ENCODE measurements at regions of chr3 and their contacts with region 1.

Region 1: GRCh38 chr3:72996473-72997333 is at the start of gene PPP4R2:
- DNase-seq: peak; percentile 90
- H3K4me3 Mint-ChIP-seq: peak within 1 kb of the TSS; percentile 86
- H3K27ac Mint-ChIP-seq: peak within 1 kb of the TSS; percentile 88
- H3K4me1 Mint-ChIP-seq: peaks cover 38% of the 10 kb centered on the region
- H3K27me3 Mint-ChIP-seq: no peaks in the 10 kb centered on the region
- total RNA-seq, gene PPP4R2: 68.1 to 71.6 TPM

Region 2: DNA sequence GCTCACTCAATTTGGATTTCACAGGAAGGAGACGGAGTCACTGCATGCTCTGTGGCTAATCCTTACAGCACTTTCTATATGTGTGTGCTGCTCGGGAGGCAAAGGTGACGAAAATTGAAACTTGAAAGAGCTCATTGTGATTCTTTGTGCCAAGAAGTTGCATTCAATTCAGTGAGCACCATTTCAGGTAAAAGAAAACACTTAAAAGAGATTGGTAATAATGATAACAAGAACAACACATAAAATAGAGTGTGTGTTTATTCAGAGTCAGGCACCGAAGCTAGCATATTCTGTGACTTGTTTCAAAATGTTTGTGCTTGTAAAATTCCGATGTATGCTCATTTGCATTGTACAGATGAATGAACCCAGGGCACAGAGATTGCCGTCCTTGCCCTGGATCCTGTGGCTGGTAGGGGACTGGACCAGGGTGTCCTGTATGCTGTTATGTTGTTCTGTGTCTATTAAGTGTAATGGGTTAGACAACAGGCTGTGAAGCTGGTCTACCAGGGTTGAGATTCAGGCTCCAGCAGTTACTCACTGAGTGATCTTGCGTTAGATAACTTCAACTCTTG is 1018.5 kb before region 1 on chr3:
- CTCF ChIA-PET with region 1: no interaction called
- intact Hi-C with region 1: no loop called
- DNase-seq: peak; percentile 76
- H3K4me3 Mint-ChIP-seq: no peak overlapping the region
- H3K27ac Mint-ChIP-seq: peak overlapping the region; percentile 82
- H3K4me1 Mint-ChIP-seq: peaks cover 33% of the 10 kb centered on the region
- H3K27me3 Mint-ChIP-seq: peaks cover 18% of the 10 kb centered on the region

Region 3: DNA sequence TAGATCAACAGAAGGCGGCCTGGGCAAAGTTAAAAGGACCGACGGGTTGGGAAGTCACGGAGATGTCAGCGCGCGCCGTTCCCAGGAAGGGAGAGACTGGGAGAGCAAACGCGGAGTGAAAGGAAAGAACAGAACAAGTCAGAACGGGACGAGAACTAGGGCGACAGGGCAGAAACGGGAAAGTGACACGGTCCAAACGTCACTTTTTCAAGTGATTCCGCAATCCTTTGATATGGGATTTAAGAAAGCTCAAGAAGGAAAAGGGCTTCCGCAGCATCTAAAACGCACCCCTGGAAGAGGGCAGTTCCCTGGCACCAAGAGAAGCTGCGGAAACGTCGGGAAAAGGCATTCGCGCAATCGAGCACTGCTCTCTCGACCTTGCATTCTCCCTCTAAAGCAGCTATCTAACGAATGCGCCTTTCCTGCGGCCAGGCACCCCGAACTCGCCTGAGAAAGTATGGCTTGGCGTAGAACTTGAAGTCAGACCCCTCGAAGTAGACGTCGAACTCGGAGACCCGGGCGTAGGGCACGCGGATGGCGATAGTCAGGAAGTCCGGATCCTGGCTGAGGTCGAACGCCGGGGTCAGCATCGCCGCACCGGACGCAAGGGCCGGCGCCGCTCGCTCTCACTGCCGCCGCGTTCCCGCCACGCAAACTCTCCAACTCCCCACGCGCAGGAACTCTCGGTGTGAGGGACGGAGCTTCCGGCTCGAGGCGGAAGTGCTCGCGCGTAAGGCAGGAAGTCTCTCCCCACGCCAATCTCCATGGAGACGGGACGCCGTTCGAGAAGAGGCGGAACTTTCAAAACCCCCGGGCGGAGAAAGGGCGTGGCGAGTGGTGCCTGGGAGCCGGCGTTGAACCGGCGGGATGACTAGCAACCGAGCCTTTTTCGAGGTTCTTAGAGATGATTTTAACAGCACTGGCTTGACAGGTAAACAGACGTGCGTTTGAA is 148.7 kb before region 1 on chr3 and contains the start of gene SHQ1:
- CTCF ChIA-PET with region 1: no interaction called
- intact Hi-C with region 1: loop called (anchors 1 kb)
- DNase-seq: peak; percentile 98
- H3K4me3 Mint-ChIP-seq: peak within 1 kb of the TSS; percentile 97
- H3K27ac Mint-ChIP-seq: peak within 1 kb of the TSS; percentile 57
- H3K4me1 Mint-ChIP-seq: peaks cover 47% of the 10 kb centered on the region
- H3K27me3 Mint-ChIP-seq: no peaks in the 10 kb centered on the region
- total RNA-seq, gene SHQ1: 19.9 to 20.5 TPM

Region 4: DNA sequence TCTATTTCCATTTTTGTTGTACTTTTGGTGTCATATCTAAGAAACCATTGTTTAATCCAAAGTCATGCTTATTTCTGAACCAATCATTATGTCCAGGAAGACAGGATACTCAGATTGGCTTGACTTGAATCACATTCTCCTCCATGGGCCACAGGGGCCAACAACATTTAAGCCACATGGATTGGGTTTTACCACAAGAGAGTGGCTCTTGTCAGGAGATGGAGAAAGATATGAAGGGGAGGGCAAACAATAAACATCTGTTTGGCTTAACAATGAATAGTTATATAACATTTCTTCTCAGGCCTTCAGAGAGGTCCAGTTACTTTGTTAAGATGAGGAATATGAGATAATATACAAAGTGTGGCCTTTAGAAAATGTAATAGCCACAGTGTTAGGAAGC is 64.3 kb before region 1 on chr3:
- CTCF ChIA-PET with region 1: no interaction called
- intact Hi-C with region 1: no loop called
- DNase-seq: no peak
- H3K4me3 Mint-ChIP-seq: no peak overlapping the region
- H3K27ac Mint-ChIP-seq: no peak overlapping the region
- H3K4me1 Mint-ChIP-seq: no peaks in the 10 kb centered on the region
- H3K27me3 Mint-ChIP-seq: no peaks in the 10 kb centered on the region

Region 5: GRCh38 chr3:72960812-72961518 is 35.7 kb before region 1 on chr3:
- CTCF ChIA-PET with region 1: interaction called, 4 read pairs
- intact Hi-C with region 1: loop called (anchors 1 kb)
- DNase-seq: no peak
- H3K4me3 Mint-ChIP-seq: no peak overlapping the region
- H3K27ac Mint-ChIP-seq: no peak overlapping the region
- H3K4me1 Mint-ChIP-seq: peaks cover 28% of the 10 kb centered on the region
- H3K27me3 Mint-ChIP-seq: no peaks in the 10 kb centered on the region

Region 6: GRCh38 chr3:73007992-73008712 is 11.4 kb after region 1 on chr3:
- CTCF ChIA-PET with region 1: interaction called, 4 read pairs
- intact Hi-C with region 1: loop called (anchors 2 kb)
- DNase-seq: no peak
- H3K4me3 Mint-ChIP-seq: no peak overlapping the region
- H3K27ac Mint-ChIP-seq: no peak overlapping the region
- H3K4me1 Mint-ChIP-seq: peaks cover 87% of the 10 kb centered on the region
- H3K27me3 Mint-ChIP-seq: no peaks in the 10 kb centered on the region

Region 7: DNA sequence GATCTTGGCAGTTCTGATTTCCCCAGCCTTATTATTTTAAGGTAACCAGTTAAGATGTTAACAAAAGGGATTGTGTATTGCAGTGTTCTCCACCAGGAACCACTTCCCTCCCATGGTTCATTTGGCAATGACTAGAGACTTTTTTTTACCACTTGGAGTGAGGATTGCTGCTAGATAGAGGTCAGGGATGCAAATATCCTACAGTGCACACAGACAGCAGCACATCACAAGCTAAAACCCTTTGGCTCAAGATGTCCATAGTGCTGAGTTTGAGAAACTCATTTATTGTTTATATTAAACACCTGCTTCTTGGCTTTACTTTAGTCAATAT is 40.6 kb after region 1 on chr3:
- CTCF ChIA-PET with region 1: no interaction called
- intact Hi-C with region 1: loop called (anchors 2 kb)
- DNase-seq: no peak
- H3K4me3 Mint-ChIP-seq: no peak overlapping the region
- H3K27ac Mint-ChIP-seq: peak overlapping the region; percentile 16
- H3K4me1 Mint-ChIP-seq: peaks cover 89% of the 10 kb centered on the region
- H3K27me3 Mint-ChIP-seq: no peaks in the 10 kb centered on the region

Region 8: GRCh38 chr3:73086071-73086494 is 89.4 kb after region 1 on chr3:
- CTCF ChIA-PET with region 1: interaction called, 4 read pairs
- intact Hi-C with region 1: loop called (anchors 1 kb)
- DNase-seq: peak; percentile 69
- H3K4me3 Mint-ChIP-seq: no peak overlapping the region
- H3K27ac Mint-ChIP-seq: no peak overlapping the region
- H3K4me1 Mint-ChIP-seq: peaks cover 8% of the 10 kb centered on the region
- H3K27me3 Mint-ChIP-seq: no peaks in the 10 kb centered on the region

Measured in activated naive CD4-positive, alpha-beta T cell treated with anti-CD3 and anti-CD28 coated beads for 36 hours (primary cell).